Dorsolateral prefrontal cortex (tissue), 120 donors: ENCODE measurements at regions of chr5 and their contacts with region 1.

Region 1: DNA sequence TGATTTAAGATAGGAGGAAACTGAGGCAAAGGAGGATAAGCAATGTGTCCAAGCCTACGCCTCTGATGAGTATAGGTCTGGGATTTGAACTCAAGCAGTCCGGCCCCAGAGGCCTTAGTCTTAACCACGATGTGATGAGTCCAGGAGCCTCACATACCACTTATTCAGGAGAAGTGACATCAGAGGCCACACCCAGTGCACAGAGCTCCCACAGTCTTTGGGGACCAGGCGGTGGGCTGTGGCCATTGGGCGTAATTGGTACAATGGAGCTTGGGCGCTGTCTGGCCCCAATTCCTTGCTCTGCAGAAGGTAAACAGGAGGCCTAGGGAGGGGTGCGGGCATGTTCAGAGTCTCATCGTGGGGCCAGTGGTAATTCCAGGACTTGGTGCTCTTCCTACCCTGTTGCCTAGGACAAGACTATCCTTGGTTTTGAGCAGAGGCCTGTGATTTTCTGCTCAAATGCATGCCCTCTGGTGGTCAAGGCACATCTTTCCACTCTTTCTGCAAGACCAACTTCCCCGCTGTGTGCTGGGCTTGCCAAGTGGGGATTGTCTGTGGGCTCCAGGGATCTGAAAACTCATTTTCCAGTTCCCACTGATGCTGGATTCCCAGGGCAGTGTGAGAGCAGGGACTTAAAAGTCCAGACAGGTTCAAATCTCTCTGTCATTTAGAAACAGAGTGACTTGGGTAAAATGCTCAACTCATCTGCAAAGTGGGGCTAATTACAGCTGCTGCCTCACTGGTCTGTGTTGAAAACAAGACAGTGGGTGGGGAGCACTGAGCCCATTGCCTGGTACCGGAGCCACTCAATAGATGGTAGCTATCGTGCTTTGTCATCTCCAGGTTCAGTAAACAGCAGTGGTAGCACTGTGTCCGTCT is 15.8 kb downstream of the NDST1 start:
- DNase-seq: peak in 8 of 10 donors; percentile 31 to 71 (median 61)
- H3K4me3 ChIP-seq: peak overlapping the region in 1 of 59 donors; percentile 9
- H3K27ac ChIP-seq: peak overlapping the region in 58 of 59 donors; percentile 12 to 100 (median 74)
- H3K27me3 ChIP-seq: no peaks in the 10 kb centered on the region
- CTCF ChIP-seq: peak; percentile 57 to 87 (median 77)

Region 2: GRCh38 chr5:150486402-150487198 is 37.1 kb before region 1 on chr5:
- intact Hi-C with region 1: loop called (anchors 1 to 5 kb)
- DNase-seq: peak in 3 of 10 donors; percentile 57 to 64 (median 60)
- H3K4me3 ChIP-seq: peak overlapping the region; percentile 62 to 99 (median 92)
- H3K27ac ChIP-seq: peak overlapping the region; percentile 67 to 98 (median 95)
- H3K27me3 ChIP-seq: no peaks in the 10 kb centered on the region
- CTCF ChIP-seq: peak in 12 of 56 donors; percentile 1 to 33 (median 16)

Region 3: DNA sequence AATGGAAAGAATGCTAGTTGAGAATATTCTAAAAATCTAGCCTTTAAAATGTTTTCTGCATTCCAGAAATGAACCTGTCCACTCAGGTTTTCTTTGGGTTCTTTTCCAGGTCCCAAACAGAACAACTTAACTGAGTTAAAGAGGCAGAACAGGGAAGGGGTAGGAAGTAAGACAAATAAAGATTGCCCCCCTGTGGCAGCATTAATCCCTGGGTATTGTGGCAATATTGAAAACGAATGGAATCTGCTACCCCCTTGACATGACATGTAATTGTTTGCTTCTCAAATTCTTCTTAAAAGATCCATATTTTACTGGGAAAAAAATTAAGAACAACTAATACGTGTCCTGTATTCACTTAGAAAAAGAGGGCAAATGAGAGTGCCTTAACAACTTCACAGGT is 186.5 kb after region 1 on chr5:
- intact Hi-C with region 1: no loop called
- DNase-seq: no peak
- H3K4me3 ChIP-seq: no peak overlapping the region
- H3K27ac ChIP-seq: no peak overlapping the region
- H3K27me3 ChIP-seq: no peaks in the 10 kb centered on the region
- CTCF ChIP-seq: peak in 19 of 56 donors; percentile 8 to 49 (median 22)

Region 4: GRCh38 chr5:151470439-151470838 is 946.7 kb after region 1 on chr5:
- intact Hi-C with region 1: no loop called
- DNase-seq: no peak
- H3K4me3 ChIP-seq: no peak overlapping the region
- H3K27ac ChIP-seq: peak overlapping the region in 2 of 59 donors; percentile 10 to 25
- H3K27me3 ChIP-seq: no peaks in the 10 kb centered on the region
- CTCF ChIP-seq: no peak